ENCODE measurements at regions of chr19 and their contacts with region 1.

Region 1: GRCh38 chr19:5827891-5828660 is 11.4 kb downstream of the FUT6 start:
- DNase-seq: peak; percentile 76
- H3K4me3 ChIP-seq: peak overlapping the region; percentile 25 to 39
- H3K27ac ChIP-seq: peak overlapping the region; percentile 49 to 68
- H3K4me1 ChIP-seq: no peaks in the 10 kb centered on the region
- H3K27me3 ChIP-seq: no peaks in the 10 kb centered on the region
- CTCF ChIP-seq: no peak
- POLR2A ChIP-seq: peak; percentile 85

Region 2: GRCh38 chr19:5880604-5881078 is 52.6 kb after region 1 on chr19:
- intact Hi-C with region 1: no loop called
- DNase-seq: peak; percentile 57
- H3K4me3 ChIP-seq: no peak overlapping the region
- H3K27ac ChIP-seq: peak overlapping the region in 1 of 2 donors; percentile 45
- H3K4me1 ChIP-seq: no peaks in the 10 kb centered on the region
- H3K27me3 ChIP-seq: no peaks in the 10 kb centered on the region
- CTCF ChIP-seq: no peak
- POLR2A ChIP-seq: no peak

Region 3: GRCh38 chr19:5891938-5892771 is 64.1 kb after region 1 on chr19:
- intact Hi-C with region 1: loop called (anchors 2 kb)
- DNase-seq: no peak
- H3K4me3 ChIP-seq: no peak overlapping the region
- H3K27ac ChIP-seq: no peak overlapping the region
- H3K4me1 ChIP-seq: no peaks in the 10 kb centered on the region
- H3K27me3 ChIP-seq: no peaks in the 10 kb centered on the region
- CTCF ChIP-seq: peak in 3 of 4 experiments; percentile 61 to 77 (median 74)
- POLR2A ChIP-seq: no peak